Adrenal gland (tissue), 19 donors: ENCODE measurements at regions of chrX and their contacts with region 1.

Region 1: GRCh38 chrX:150361063-150361776 is 1.9 kb upstream of the MAMLD1 start:
- DNase-seq: peak in 3 of 7 donors; percentile 27 to 51 (median 37)
- H3K4me3 ChIP-seq: peak overlapping the region in 2 of 4 donors; percentile 43 to 63
- H3K27ac ChIP-seq: no peak overlapping the region
- H3K4me1 ChIP-seq: peaks cover 0 to 4% of the 10 kb centered on the region in 2 donors
- H3K27me3 ChIP-seq: no peaks in the 10 kb centered on the region
- CTCF ChIP-seq: no peak
- POLR2A ChIP-seq: peak in 1 of 2 donors; percentile 4

Region 2: GRCh38 chrX:149313871-149314371 is 1047.3 kb before region 1 on chrX:
- intact Hi-C with region 1: no loop called
- DNase-seq: peak in 2 of 7 donors; percentile 10 to 14
- H3K4me3 ChIP-seq: no peak overlapping the region
- H3K27ac ChIP-seq: no peak overlapping the region
- H3K4me1 ChIP-seq: no peaks in the 10 kb centered on the region
- H3K27me3 ChIP-seq: no peaks in the 10 kb centered on the region
- CTCF ChIP-seq: no peak
- POLR2A ChIP-seq: no peak

Region 3: DNA sequence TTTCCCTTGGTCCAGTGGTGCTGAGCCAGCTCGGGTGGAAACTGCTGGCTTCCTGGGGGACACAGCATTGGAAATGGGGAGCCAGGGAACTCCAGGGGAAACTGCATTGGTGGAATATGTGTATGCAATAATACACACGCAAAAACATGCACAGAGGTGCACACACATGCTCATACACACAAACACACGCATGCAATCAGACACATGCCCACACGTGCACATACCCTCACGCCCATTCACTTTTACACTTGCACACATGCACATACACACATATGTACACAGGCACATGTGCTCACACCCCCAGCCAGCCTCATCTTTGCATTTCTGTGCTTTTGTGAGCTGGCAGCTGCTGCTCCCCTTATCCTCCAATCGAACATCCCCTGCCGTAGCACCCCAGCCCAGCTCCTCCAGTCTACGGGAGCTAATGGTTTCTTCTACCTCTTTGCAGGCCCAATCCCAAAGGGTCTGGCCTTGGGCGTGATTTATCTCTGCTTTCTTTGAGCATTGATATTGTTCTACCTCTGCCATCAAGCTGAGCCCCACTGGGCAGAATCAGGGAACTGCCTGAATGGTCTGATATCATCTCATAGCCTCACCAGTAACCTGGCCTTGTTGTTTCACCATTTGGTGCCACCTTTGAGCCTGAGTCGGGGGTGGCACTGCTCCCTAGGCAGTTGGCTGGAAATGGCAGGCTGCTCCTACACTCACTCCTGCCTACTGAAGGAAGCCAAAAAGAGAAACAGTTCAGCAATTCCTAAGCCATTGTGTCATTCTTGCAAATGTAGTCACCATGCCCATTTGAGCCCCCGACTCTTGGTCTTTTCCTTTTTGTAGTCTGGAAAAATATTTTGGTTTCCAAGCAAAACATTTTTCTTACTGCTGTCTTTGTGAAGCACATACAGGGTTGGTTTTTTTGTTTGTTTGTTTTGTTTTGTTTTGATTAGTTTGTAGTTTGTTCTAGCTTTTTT is 102.5 kb before region 1 on chrX:
- intact Hi-C with region 1: no loop called
- DNase-seq: no peak
- H3K4me3 ChIP-seq: no peak overlapping the region
- H3K27ac ChIP-seq: no peak overlapping the region
- H3K4me1 ChIP-seq: no peaks in the 10 kb centered on the region
- H3K27me3 ChIP-seq: peaks cover 6% of the 10 kb centered on the region
- CTCF ChIP-seq: no peak
- POLR2A ChIP-seq: no peak

Region 4: GRCh38 chrX:150329868-150330267 is 31.4 kb before region 1 on chrX:
- intact Hi-C with region 1: loop called in 1 of 2 experiments (anchors 2 kb)
- DNase-seq: no peak
- H3K4me3 ChIP-seq: no peak overlapping the region
- H3K27ac ChIP-seq: no peak overlapping the region
- H3K4me1 ChIP-seq: no peaks in the 10 kb centered on the region
- H3K27me3 ChIP-seq: no peaks in the 10 kb centered on the region
- CTCF ChIP-seq: no peak
- POLR2A ChIP-seq: no peak